ENCODE measurements at regions of chr11 and their contacts with region 1.

Region 1: DNA sequence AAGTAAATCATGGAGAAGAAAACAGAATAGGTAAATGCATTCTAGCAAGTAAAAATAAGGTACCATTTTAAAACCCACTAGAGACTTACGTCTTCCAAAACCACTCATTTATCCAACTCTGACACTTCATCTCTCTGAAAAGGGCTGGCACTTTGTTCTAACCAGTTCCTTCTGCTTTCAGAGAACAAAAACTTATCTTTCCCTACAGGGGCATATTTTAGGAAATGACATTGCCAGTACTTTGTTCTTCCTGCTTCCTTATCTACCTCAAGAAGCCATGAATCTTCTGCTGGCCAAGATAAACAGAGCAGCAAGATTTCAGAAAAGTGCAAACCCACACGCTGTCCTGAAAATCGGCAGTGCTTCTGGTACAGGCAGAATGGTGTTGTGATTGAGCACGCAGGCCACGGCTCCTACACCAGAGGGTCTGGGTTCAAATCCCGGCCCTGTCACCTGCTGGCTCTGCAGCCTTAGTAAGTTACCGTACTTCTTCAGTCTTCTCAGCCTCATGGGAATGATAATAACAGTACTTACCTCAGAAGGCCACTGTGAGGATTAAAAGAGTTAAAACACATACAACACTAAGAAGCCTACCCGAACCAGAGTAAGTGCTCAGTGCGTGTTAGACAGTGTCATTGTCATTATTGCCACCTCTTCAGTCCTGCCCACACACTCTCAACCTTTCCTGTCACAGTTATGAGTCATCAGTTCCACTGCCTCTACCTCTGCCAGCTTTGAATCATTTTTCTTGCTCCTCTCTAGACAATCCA is 11.0 kb downstream of the MPZL3 start:
- DNase-seq: no peak
- ATAC-seq: peak; percentile 58 to 62
- H3K4me3 ChIP-seq: no peak overlapping the region
- H3K27ac ChIP-seq: peak overlapping the region; percentile 25 to 54 (median 41)
- H3K4me1 ChIP-seq: no peaks in the 10 kb centered on the region
- H3K27me3 ChIP-seq: peaks cover 0 to 4% (median 0%) of the 10 kb centered on the region in 3 donors
- CTCF ChIP-seq: no peak
- POLR2A ChIP-seq: no peak

Region 2: GRCh38 chr11:118277306-118277705 is 36.1 kb after region 1 on chr11:
- in situ Hi-C with region 1: no loop called
- intact Hi-C with region 1: loop called (anchors 5 kb)
- DNase-seq: no peak
- ATAC-seq: peak in 1 of 2 donors; percentile 44
- H3K4me3 ChIP-seq: no peak overlapping the region
- H3K27ac ChIP-seq: peak overlapping the region in 1 of 4 donors; percentile 57
- H3K4me1 ChIP-seq: no peaks in the 10 kb centered on the region
- H3K27me3 ChIP-seq: peaks cover 4 to 13% (median 13%) of the 10 kb centered on the region in 3 donors
- CTCF ChIP-seq: no peak
- POLR2A ChIP-seq: peak in 1 of 2 donors; percentile 9